Activated naive CD4-positive, alpha-beta T cell treated with anti-CD3 and anti-CD28 coated beads for 36 hours (primary cell): ENCODE measurements at regions of chr14 and their contacts with region 1.

Region 1: DNA sequence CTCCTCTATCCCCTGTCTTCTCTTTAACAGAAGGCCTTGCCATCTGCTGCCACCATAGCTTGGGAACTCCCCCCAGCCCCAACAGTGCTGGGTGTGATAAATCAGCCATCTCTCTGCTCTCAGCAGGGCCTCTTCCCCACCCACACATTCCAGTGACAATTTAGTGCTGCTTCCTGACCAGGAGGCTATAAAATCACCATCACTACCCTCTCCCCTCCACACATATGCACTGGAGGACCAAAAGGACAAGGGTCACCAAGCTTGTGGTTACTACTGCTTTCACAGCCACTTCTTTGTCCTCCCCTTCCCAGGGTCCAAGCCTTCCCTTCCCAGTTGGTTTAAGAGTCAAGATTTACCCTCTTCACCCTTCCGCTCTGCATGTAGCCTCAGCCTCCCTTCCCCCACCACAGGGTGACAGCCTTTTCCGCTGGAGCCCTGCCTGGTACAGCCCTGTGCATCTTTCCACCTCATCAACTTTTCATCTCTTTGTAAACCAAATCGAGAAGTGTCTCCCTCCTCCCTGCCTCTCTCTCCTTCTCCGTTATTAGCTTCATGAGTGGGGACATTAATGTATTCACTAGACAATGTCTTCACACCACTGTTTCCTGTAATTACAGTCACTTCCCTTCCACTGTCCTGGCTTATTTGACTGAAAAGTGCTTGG is 9.4 kb downstream of the PSMB5 start:
- DNase-seq: peak; percentile 55
- H3K4me3 Mint-ChIP-seq: peak overlapping the region; percentile 16
- H3K27ac Mint-ChIP-seq: peak overlapping the region; percentile 85
- H3K4me1 Mint-ChIP-seq: peaks cover 73% of the 10 kb centered on the region
- H3K27me3 Mint-ChIP-seq: no peaks in the 10 kb centered on the region

Region 2: DNA sequence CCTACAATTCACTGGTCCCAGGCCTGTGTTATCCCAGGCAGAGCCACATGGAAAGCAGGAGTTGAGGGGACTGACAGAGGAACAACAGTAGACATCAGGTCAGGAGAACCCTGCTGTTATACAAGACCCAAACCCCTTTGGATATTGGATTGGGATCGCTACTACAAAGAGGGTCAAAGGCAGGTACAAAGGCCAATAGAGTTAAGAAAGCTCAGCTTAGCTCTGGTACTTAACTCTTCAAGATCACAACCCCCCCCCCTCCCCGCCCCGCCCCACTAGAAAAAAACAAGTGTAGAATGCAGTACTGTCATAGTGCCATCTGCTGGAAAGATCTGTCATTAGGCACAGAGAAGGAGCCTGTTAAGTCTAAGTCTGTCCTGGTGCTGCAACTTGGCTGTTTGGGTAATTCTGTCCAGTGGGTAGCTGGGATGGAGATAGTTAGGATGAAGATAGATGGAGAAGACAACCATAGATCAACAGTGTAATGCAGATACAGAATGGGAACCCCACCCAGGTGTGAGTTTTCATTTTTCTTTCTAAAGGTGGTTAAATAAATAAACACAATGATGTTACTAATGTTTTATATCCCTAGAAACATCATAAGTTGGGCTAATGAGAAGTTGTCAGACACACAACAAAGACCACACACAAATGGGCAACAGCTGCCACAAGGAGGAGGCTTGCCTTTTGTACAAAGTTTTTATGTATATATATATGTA is 125.0 kb before region 1 on chr14:
- CTCF ChIA-PET with region 1: no interaction called
- intact Hi-C with region 1: no loop called
- DNase-seq: peak; percentile 64
- H3K4me3 Mint-ChIP-seq: no peak overlapping the region
- H3K27ac Mint-ChIP-seq: no peak overlapping the region
- H3K4me1 Mint-ChIP-seq: peaks cover 12% of the 10 kb centered on the region
- H3K27me3 Mint-ChIP-seq: no peaks in the 10 kb centered on the region

Region 3: GRCh38 chr14:22994762-22995275 is 30.5 kb before region 1 on chr14:
- CTCF ChIA-PET with region 1: interaction called, 16 read pairs
- intact Hi-C with region 1: no loop called
- DNase-seq: peak; percentile 56
- H3K4me3 Mint-ChIP-seq: no peak overlapping the region
- H3K27ac Mint-ChIP-seq: no peak overlapping the region
- H3K4me1 Mint-ChIP-seq: no peaks in the 10 kb centered on the region
- H3K27me3 Mint-ChIP-seq: no peaks in the 10 kb centered on the region

Region 4: GRCh38 chr14:23183479-23183878 is 158.2 kb after region 1 on chr14 and contains the start of gene SLC7A8:
- CTCF ChIA-PET with region 1: no interaction called
- intact Hi-C with region 1: no loop called
- DNase-seq: peak; percentile 23
- H3K4me3 Mint-ChIP-seq: no peak within 1 kb of the TSS
- H3K27ac Mint-ChIP-seq: no peak within 1 kb of the TSS
- H3K4me1 Mint-ChIP-seq: peaks cover 4% of the 10 kb centered on the region
- H3K27me3 Mint-ChIP-seq: peaks cover 11% of the 10 kb centered on the region
- total RNA-seq, gene SLC7A8: 0.79 to 1.1 TPM